Activated CD4-positive, alpha-beta memory T cell treated with anti-CD3 and anti-CD28 coated beads for 36 hours (primary cell): ENCODE measurements at regions of chr17 and their contacts with region 1.

Region 1: DNA sequence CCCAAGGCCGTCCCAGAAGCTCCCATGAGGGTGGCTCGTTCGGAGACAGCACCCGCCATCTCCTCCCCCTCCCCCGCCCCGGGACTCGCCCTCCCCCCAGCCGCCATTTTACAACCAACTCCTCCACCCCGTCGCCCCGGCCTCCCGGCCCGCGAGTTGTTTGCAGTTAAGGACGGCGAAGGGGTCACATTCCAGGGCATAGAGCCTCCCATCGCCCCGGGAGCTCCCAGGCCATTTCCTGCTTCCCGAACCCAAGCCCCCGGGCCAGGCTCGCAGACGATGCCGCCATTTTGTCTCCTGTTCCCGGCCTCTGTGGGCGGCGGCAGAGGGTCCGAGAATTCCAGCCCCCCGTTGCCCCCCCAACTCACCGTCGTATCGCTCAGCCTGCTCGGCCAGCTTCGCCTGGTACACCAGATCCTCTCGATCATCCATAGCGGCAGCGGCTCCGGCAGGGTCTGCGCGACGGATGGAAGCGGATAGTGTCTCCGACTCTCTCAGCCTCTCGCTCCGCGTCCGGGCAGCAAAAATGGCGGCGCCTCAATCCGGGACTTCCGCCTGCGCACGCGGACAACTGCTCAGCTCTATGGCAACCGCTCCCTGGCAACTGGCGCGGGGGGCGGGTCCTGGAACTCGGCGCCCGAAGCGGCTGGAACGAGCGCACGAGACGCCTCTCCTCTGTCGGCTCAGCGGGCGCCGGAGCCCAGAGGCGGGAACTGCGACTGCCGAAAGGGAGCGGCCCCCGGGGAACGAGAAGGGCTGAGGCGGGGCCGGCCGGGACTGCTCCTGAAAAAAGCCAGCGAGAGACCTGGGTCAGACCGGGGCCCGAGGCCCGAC is at the start of gene YWHAE:
- DNase-seq: peak; percentile 98
- H3K4me3 Mint-ChIP-seq: peak within 1 kb of the TSS; percentile 99
- H3K27ac Mint-ChIP-seq: peak within 1 kb of the TSS; percentile 100
- H3K4me1 Mint-ChIP-seq: peaks cover 26% of the 10 kb centered on the region
- H3K27me3 Mint-ChIP-seq: no peaks in the 10 kb centered on the region
- total RNA-seq, gene YWHAE: 505 to 509 TPM

Region 2: GRCh38 chr17:1379930-1380313 is 20.0 kb before region 1 on chr17:
- CTCF ChIA-PET with region 1: interaction called, 3 read pairs
- POLR2A ChIA-PET with region 1: interaction called, 4 read pairs
- intact Hi-C with region 1: loop called (anchors 2 kb)
- DNase-seq: peak; percentile 59
- H3K4me3 Mint-ChIP-seq: no peak overlapping the region
- H3K27ac Mint-ChIP-seq: peak overlapping the region; percentile 81
- H3K4me1 Mint-ChIP-seq: peaks cover 69% of the 10 kb centered on the region
- H3K27me3 Mint-ChIP-seq: no peaks in the 10 kb centered on the region

Region 3: DNA sequence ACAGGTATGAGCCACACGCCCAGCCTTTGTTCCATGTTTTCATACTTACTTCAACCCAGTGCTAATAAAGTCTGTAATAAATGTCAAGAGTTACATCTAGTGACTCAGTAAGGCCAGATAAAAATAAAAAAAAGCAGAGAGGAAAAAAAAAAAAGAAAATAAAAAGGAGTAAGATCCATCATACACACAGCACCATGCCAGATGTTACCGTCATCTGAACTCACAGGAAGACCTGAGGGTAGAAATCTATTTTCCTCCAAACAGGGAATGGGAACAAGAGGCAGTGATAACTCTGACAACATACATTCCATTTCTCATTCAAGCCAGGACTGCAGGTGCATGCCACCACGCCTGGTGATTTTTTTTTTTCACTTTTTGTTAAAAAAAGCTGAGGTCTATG is 35.4 kb after region 1 on chr17:
- CTCF ChIA-PET with region 1: no interaction called
- POLR2A ChIA-PET with region 1: no interaction called
- intact Hi-C with region 1: no loop called
- DNase-seq: no peak
- H3K4me3 Mint-ChIP-seq: no peak overlapping the region
- H3K27ac Mint-ChIP-seq: peak overlapping the region; percentile 23
- H3K4me1 Mint-ChIP-seq: peaks cover 22% of the 10 kb centered on the region
- H3K27me3 Mint-ChIP-seq: no peaks in the 10 kb centered on the region